GM12878 (cell line): ENCODE measurements at regions of chr16 and their contacts with region 1.

Region 1: GRCh38 chr16:10314811-10315210 is 71.0 kb upstream of the ATF7IP2 start:
- DNase-seq: no peak
- ATAC-seq: peak; percentile 9; the same call in 1 of the 3 replicates
- H3K4me3 ChIP-seq: no peak overlapping the region
- H3K27ac ChIP-seq: no peak overlapping the region
- H3K4me1 ChIP-seq: peaks cover 13% of the 10 kb centered on the region
- H3K27me3 ChIP-seq: no peaks in the 10 kb centered on the region
- CTCF ChIP-seq: peak; percentile 9 to 52 (median 29); a peak in 4 of 6 replicates
- EP300 ChIP-seq: no peak
- POLR2A ChIP-seq: no peak
- RAD21 ChIP-seq: peak; percentile 63

Region 2: GRCh38 chr16:10325783-10326543 is 11.2 kb after region 1 on chr16:
- CTCF ChIA-PET with region 1: interaction called, 10 read pairs
- POLR2A ChIA-PET with region 1: interaction called, 4 read pairs
- RAD21 ChIA-PET with region 1: interaction called, 17 read pairs
- SMC1A ChIA-PET with region 1: interaction called, 11 read pairs
- in situ Hi-C with region 1: no loop called
- intact Hi-C with region 1: no loop called
- DNase-seq: no peak
- ATAC-seq: no peak
- H3K4me3 ChIP-seq: no peak overlapping the region
- H3K27ac ChIP-seq: no peak overlapping the region
- H3K4me1 ChIP-seq: 0 out of 2 replicates have a peak, but pooled peaks cover 3% of the 10 kb centered on the region
- H3K27me3 ChIP-seq: no peaks in the 10 kb centered on the region
- CTCF ChIP-seq: no peak
- EP300 ChIP-seq: no peak
- POLR2A ChIP-seq: no peak
- RAD21 ChIP-seq: no peak

Region 3: DNA sequence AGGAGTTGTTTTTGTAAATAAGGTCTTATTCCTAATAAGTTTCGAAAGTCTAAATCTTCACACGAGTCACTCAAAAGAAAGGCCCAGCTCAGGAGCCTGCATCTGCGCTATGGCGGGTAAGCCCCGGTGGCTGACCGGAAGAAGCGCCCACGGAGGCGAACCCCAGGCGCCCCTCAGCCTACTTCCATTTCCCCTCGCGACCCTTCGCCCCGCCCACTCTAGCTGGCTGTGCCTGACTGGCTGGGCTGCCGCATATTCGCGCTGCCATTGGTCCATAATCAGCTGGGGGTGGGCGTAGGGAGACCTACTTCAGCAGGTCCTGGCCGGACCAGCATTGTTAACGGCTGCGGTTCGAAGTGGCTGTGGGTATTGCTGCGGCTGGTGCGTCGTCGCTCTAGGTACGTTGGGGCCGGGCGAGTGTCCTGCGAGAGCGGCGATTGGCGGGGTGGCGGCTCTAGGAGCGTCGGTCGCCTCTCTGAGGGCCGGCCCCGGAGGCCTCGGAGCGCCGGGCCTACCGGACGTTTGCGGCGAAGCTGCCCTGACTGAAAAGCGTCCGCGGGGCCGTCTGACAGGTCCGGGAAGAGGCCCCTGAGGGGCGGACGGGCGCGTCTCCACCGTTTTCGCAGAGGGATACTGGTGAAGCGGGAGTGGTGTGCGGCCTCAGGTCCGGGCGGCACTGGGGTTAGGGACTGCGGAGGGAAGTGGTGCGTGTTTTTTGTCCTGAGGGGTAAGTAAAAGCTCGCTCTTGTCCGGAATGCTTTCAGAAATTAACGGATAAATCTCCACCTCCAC is 71.1 kb after region 1 on chr16 and contains the start of gene ATF7IP2:
- CTCF ChIA-PET with region 1: interaction called, 6 read pairs
- POLR2A ChIA-PET with region 1: interaction called, 3 read pairs
- RAD21 ChIA-PET with region 1: interaction called, 5 read pairs
- SMC1A ChIA-PET with region 1: interaction called, 4 read pairs
- in situ Hi-C with region 1: no loop called
- intact Hi-C with region 1: loop called (anchors 5 kb)
- DNase-seq: peak; percentile 80
- ATAC-seq: peak; percentile 97
- H3K4me3 ChIP-seq: peak within 1 kb of the TSS; percentile 80
- H3K27ac ChIP-seq: peak within 1 kb of the TSS; percentile 80
- H3K4me1 ChIP-seq: peaks cover 7% of the 10 kb centered on the region
- H3K27me3 ChIP-seq: no peaks in the 10 kb centered on the region
- CTCF ChIP-seq: no peak
- EP300 ChIP-seq: peak in 1 of 2 experiments; percentile 25; a peak in 1 of 4 replicates
- POLR2A ChIP-seq: peak; percentile 100
- RAD21 ChIP-seq: no peak
- polyA plus RNA-seq, gene ATF7IP2: 67.9 to 75.2 TPM

Region 4: GRCh38 chr16:10509534-10510025 is 194.8 kb after region 1 on chr16:
- CTCF ChIA-PET with region 1: interaction called, 132 read pairs
- POLR2A ChIA-PET with region 1: interaction called, 9 read pairs
- RAD21 ChIA-PET with region 1: interaction called, 92 read pairs
- SMC1A ChIA-PET with region 1: interaction called, 118 read pairs
- in situ Hi-C with region 1: loop called (anchors 5 kb)
- intact Hi-C with region 1: loop called (anchors 1 kb)
- DNase-seq: peak; percentile 70
- ATAC-seq: peak; percentile 99
- H3K4me3 ChIP-seq: no peak overlapping the region
- H3K27ac ChIP-seq: no peak overlapping the region
- H3K4me1 ChIP-seq: peaks cover 3% of the 10 kb centered on the region; the same call in 1 of the 2 replicates
- H3K27me3 ChIP-seq: no peaks in the 10 kb centered on the region
- CTCF ChIP-seq: peak; percentile 77 to 92 (median 86)
- EP300 ChIP-seq: no peak
- POLR2A ChIP-seq: no peak
- RAD21 ChIP-seq: peak; percentile 97